ENCODE measurements at regions of chr12 and their contacts with region 1.

Region 1: GRCh38 chr12:106841510-106842302 is 67.2 kb downstream of the RIC8B start:
- DNase-seq: peak; percentile 65
- H3K4me3 ChIP-seq: peak overlapping the region in 1 of 2 experiments; percentile 8; a peak in 1 of 4 replicates
- H3K27ac ChIP-seq: peak overlapping the region; percentile 55 to 60
- H3K4me1 ChIP-seq: peaks cover 9 to 27% of the 10 kb centered on the region in 2 experiments; a peak in 2 of 4 replicates
- H3K27me3 ChIP-seq: no peaks in the 10 kb centered on the region
- CTCF ChIP-seq: peak; percentile 88
- EP300 ChIP-seq: peak; percentile 5 to 32; a peak in 2 of 4 replicates
- RAD21 ChIP-seq: peak; percentile 86

Region 2: GRCh38 chr12:106386813-106387535 is 454.7 kb before region 1 on chr12:
- CTCF ChIA-PET with region 1: interaction called, 18 read pairs
- POLR2A ChIA-PET with region 1: no interaction called
- DNase-seq: no peak
- H3K4me3 ChIP-seq: no peak overlapping the region
- H3K27ac ChIP-seq: no peak overlapping the region
- H3K4me1 ChIP-seq: no peaks in the 10 kb centered on the region
- H3K27me3 ChIP-seq: no peaks in the 10 kb centered on the region
- CTCF ChIP-seq: no peak
- EP300 ChIP-seq: no peak
- RAD21 ChIP-seq: no peak

Region 3: GRCh38 chr12:106722854-106723253 is 118.9 kb before region 1 on chr12:
- CTCF ChIA-PET with region 1: no interaction called
- POLR2A ChIA-PET with region 1: no interaction called
- DNase-seq: no peak
- H3K4me3 ChIP-seq: no peak overlapping the region
- H3K27ac ChIP-seq: no peak overlapping the region
- H3K4me1 ChIP-seq: no peaks in the 10 kb centered on the region
- H3K27me3 ChIP-seq: no peaks in the 10 kb centered on the region
- CTCF ChIP-seq: no peak
- EP300 ChIP-seq: no peak
- RAD21 ChIP-seq: no peak

Region 4: DNA sequence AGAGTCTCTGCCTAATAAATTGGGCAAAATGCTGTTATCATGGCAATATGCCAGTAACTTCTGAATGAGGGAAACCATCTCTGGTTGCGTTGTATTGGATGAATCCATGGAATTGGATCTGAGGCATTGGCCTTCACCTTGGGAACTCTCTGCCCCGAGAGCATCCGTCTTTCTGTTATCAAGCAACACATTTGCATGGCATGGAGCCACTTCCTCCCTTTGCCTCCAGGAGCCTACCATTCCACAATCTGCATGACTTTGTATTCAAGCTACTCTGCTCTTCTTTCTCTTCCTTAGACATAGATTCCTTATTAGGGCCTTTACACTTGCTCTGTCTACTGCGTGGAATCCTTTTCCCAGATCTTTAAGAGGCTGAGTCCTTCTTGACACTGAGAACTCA is 10.0 kb before region 1 on chr12:
- CTCF ChIA-PET with region 1: interaction called, 10 read pairs
- POLR2A ChIA-PET with region 1: no interaction called
- DNase-seq: peak; percentile 31
- H3K4me3 ChIP-seq: no peak overlapping the region
- H3K27ac ChIP-seq: no peak overlapping the region
- H3K4me1 ChIP-seq: peaks cover 0 to 7% of the 10 kb centered on the region in 2 experiments; a peak in 2 of 4 replicates
- H3K27me3 ChIP-seq: no peaks in the 10 kb centered on the region
- CTCF ChIP-seq: no peak
- EP300 ChIP-seq: peak in 1 of 2 experiments; percentile 29; a peak in 1 of 4 replicates
- RAD21 ChIP-seq: no peak